Tibial artery (tissue), 4 donors: ENCODE measurements at regions of chr1 and their contacts with region 1.

Region 1: DNA sequence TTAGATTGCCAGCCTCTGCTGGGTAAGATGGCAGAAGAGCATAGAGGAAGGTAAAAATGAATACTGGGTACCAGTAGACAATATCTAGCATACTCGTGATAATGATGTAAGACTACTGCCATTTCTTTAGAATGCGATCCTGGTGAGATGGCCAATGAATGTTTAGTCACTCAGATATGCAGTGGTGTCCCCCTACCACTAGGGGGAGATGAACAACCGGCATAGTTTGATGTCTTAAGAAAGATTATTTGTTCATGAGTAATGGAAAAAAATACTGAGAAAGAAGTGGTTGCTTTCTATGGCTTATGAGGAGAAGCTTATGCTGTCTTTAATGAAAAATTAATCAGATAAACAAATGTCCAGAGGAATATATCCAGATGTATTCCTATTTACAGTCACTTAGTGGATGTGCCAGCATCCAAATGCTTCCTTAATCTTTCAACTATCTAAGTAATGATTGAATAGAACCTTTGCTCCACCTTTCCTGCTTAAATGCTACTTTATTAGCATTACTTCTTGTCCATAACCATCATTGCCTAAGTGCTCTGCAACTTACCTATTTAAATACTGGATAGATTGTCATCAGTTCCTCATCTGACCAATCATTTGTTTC is 256.6 kb downstream of the ST6GALNAC3 start:
- DNase-seq: no peak
- H3K4me3 ChIP-seq: no peak overlapping the region
- H3K27ac ChIP-seq: no peak overlapping the region
- H3K4me1 ChIP-seq: no peaks in the 10 kb centered on the region
- H3K27me3 ChIP-seq: no peaks in the 10 kb centered on the region
- CTCF ChIP-seq: peak; percentile 73 to 82

Region 2: GRCh38 chr1:76547916-76548315 is 216.8 kb after region 1 on chr1:
- intact Hi-C with region 1: no loop called
- DNase-seq: no peak
- H3K4me3 ChIP-seq: no peak overlapping the region
- H3K27ac ChIP-seq: no peak overlapping the region
- H3K4me1 ChIP-seq: no peaks in the 10 kb centered on the region
- H3K27me3 ChIP-seq: no peaks in the 10 kb centered on the region
- CTCF ChIP-seq: no peak

Region 3: GRCh38 chr1:77126307-77126706 is 795.2 kb after region 1 on chr1:
- intact Hi-C with region 1: loop called (anchors 10 kb)
- DNase-seq: no peak
- H3K4me3 ChIP-seq: no peak overlapping the region
- H3K27ac ChIP-seq: no peak overlapping the region
- H3K4me1 ChIP-seq: no peaks in the 10 kb centered on the region
- H3K27me3 ChIP-seq: no peaks in the 10 kb centered on the region
- CTCF ChIP-seq: peak; percentile 38 to 39